K562 (cell line): ENCODE measurements at regions of chr22 and their contacts with region 1.

Region 1: DNA sequence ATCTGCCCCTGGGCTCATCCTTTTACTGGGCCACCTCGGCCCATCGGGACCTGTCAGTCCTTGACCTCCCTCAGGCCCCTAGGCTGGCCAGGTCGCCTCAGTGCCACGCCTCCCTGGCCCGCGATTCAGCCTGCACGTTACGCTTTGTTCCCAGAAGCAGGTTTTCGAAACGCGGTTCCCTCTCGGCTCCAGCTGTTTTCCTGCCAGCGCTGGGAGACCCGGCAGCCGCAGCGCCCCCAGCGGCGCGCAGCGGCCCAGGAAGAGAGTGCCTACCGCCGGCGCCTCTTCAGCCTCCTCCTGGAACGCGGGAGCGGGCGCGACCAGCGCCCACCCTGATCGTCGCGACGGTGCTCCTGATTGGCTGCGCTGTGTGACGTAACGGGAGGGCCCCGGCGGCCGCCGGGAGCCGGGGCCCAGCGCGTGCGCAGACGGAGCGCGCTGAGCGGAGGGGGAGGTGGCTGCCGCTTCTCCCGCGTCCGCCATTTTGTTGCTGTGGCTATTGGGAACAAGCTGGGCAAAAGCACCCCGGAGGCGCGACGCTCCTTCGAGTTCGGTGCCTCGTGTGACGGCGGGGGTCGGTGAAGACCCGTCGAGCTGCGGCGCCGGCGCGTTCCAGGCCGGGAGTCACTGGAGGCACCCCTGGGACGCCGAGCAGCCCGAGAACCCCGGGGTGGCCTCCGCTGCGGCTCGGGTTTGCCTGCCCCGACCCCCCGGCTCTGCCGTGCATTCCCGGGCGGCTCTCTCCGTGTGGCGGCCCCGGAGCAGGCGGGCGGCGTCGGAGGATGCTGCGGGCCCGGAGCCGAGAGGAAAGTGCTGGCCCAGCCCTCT is at the start of gene CRKL:
- DNase-seq: peak; percentile 100
- ATAC-seq: peak; percentile 93
- H3K4me3 ChIP-seq: peak within 1 kb of the TSS; percentile 67
- H3K27ac ChIP-seq: peak within 1 kb of the TSS; percentile 89
- H3K4me1 ChIP-seq: peaks cover 20 to 41% of the 10 kb centered on the region in 2 experiments
- H3K27me3 ChIP-seq: no peaks in the 10 kb centered on the region
- CTCF ChIP-seq: peak; percentile 99 to 100 (median 100)
- EP300 ChIP-seq: peak; percentile 88
- POLR2A ChIP-seq: no peak
- RAD21 ChIP-seq: no peak
- polyA plus RNA-seq, gene CRKL: 100 to 105 TPM

Region 2: GRCh38 chr22:20803696-20804324 is 113.4 kb before region 1 on chr22:
- CTCF ChIA-PET with region 1: interaction called, 3 read pairs
- POLR2A ChIA-PET with region 1: interaction called, 9 read pairs
- in situ Hi-C with region 1: no loop called
- intact Hi-C with region 1: loop called (anchors 2 kb)
- DNase-seq: peak; percentile 78 to 84 (median 84)
- ATAC-seq: peak; percentile 89
- H3K4me3 ChIP-seq: no peak overlapping the region
- H3K27ac ChIP-seq: no peak overlapping the region
- H3K4me1 ChIP-seq: peaks cover 3 to 13% of the 10 kb centered on the region in 2 experiments; a peak in 3 of 5 replicates
- H3K27me3 ChIP-seq: no peaks in the 10 kb centered on the region
- CTCF ChIP-seq: peak; percentile 94 to 100 (median 98)
- EP300 ChIP-seq: no peak
- POLR2A ChIP-seq: no peak
- RAD21 ChIP-seq: peak; percentile 95 to 99

Region 3: DNA sequence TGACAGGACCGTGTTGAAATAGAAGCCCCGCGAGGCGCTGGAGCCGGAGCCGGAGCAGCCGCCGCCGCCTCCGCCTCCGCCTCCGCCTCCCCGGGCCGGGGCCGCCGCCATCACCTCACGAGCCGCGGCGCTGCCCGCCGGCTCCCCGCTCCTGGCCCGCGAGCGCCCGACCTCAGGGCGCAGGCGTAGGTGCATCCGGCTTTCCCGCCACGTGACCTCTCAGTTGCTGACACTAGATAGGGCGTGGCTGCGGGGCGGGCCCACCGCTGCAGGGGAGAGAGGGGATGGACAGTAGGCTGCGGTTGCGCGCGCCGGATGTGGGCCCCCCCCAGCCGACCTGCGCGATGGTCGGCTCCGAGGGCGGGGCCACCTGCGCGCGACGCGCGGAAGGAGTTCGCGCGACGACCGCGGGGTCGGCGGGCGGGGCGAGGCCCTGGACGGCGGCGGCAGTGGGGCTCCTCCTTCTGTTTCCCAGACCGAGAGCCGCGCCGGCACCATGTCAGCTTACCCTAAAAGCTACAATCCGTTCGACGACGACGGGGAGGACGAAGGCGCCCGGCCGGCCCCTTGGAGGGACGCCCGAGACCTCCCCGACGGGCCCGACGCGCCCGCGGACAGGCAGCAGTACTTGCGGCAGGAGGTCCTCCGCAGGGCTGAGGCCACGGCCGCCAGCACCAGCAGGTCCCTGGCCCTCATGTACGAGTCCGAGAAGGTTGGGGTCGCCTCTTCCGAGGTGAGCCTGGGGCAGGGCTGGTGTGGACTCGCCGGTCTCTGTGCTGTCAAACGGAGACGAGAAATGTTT is 58.4 kb before region 1 on chr22 and contains the starts of genes PI4KA and SNAP29:
- CTCF ChIA-PET with region 1: no interaction called
- POLR2A ChIA-PET with region 1: interaction called, 8 read pairs
- in situ Hi-C with region 1: no loop called
- intact Hi-C with region 1: loop called (anchors 2 kb)
- DNase-seq: peak; percentile 100
- ATAC-seq: peak; percentile 92
- H3K4me3 ChIP-seq: peak within 1 kb of the TSS; percentile 57
- H3K27ac ChIP-seq: peak within 1 kb of the TSS; percentile 79
- H3K4me1 ChIP-seq: peaks cover 53 to 78% of the 10 kb centered on the region in 2 experiments
- H3K27me3 ChIP-seq: no peaks in the 10 kb centered on the region
- CTCF ChIP-seq: peak in 1 of 3 experiments; percentile 42; a peak in 2 of 6 replicates
- EP300 ChIP-seq: peak; percentile 84
- POLR2A ChIP-seq: no peak
- RAD21 ChIP-seq: no peak
- polyA plus RNA-seq, gene PI4KA: 7.3 to 11.1 TPM
- polyA plus RNA-seq, gene SNAP29: 19.5 to 22.8 TPM

Region 4: DNA sequence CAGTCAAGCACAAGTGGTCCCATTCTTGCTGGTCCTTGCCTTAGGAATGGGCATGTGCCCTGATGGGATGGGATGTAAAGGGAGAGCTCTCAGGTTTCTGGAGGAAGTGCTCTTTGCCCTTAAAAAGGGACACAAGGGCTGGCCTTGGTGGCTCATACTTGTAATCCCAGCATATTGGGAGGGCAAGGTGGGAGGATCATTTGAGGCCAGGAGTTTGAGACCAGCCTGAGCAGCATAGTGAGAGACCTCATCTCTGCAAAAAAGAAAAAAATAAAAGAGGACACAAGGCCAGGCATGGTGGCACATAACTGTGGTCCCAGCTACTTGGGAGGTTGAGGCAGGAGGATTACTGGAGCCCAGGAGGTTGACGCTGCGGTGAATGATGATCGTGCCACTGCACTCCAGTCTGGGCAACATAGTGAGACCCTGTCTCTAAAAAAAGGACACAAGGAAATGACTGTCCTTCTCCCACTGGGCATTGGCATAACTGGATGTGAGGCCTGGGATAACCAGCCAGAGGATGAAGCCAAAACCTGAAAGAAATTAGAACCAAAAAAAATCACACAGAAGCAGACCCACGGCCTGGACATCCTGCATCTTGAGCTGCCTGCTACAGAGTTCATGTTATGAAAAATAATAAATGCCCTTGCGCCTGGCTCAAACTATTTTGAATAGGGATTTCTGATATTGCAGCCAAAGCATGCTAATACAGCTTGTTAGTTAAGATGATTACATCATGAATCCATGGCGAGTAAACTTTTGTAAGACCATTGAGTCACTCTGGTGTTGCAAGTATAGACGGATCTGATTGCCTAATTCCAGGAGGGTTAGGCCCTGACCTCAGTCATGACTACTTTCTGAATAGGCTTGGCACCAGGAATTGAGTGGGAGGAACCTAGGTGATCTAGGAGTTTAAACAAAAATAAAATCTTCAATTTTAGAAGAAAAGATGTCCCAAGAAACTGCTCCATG is 12.9 kb before region 1 on chr22:
- CTCF ChIA-PET with region 1: no interaction called
- POLR2A ChIA-PET with region 1: interaction called, 1,556 read pairs
- in situ Hi-C with region 1: no loop called
- intact Hi-C with region 1: loop called (anchors 1 kb)
- DNase-seq: peak; percentile 48 to 63 (median 54)
- ATAC-seq: peak; percentile 9; the same call in 2 of the 3 replicates
- H3K4me3 ChIP-seq: no peak overlapping the region
- H3K27ac ChIP-seq: no peak overlapping the region
- H3K4me1 ChIP-seq: no peaks in the 10 kb centered on the region
- H3K27me3 ChIP-seq: peaks cover 15 to 27% of the 10 kb centered on the region in 2 experiments
- CTCF ChIP-seq: no peak
- EP300 ChIP-seq: peak; percentile 51; the same call in 1 of the 2 replicates
- POLR2A ChIP-seq: no peak
- RAD21 ChIP-seq: no peak

Region 5: GRCh38 chr22:20943104-20943933 is 26.1 kb after region 1 on chr22:
- CTCF ChIA-PET with region 1: no interaction called
- POLR2A ChIA-PET with region 1: interaction called, 1,556 read pairs
- in situ Hi-C with region 1: no loop called
- intact Hi-C with region 1: loop called (anchors 2 kb)
- DNase-seq: no peak
- ATAC-seq: no peak
- H3K4me3 ChIP-seq: no peak overlapping the region
- H3K27ac ChIP-seq: no peak overlapping the region
- H3K4me1 ChIP-seq: peaks cover 9 to 23% of the 10 kb centered on the region in 2 experiments; a peak in 3 of 5 replicates
- H3K27me3 ChIP-seq: no peaks in the 10 kb centered on the region
- CTCF ChIP-seq: no peak
- EP300 ChIP-seq: no peak
- POLR2A ChIP-seq: no peak
- RAD21 ChIP-seq: no peak

Region 6: DNA sequence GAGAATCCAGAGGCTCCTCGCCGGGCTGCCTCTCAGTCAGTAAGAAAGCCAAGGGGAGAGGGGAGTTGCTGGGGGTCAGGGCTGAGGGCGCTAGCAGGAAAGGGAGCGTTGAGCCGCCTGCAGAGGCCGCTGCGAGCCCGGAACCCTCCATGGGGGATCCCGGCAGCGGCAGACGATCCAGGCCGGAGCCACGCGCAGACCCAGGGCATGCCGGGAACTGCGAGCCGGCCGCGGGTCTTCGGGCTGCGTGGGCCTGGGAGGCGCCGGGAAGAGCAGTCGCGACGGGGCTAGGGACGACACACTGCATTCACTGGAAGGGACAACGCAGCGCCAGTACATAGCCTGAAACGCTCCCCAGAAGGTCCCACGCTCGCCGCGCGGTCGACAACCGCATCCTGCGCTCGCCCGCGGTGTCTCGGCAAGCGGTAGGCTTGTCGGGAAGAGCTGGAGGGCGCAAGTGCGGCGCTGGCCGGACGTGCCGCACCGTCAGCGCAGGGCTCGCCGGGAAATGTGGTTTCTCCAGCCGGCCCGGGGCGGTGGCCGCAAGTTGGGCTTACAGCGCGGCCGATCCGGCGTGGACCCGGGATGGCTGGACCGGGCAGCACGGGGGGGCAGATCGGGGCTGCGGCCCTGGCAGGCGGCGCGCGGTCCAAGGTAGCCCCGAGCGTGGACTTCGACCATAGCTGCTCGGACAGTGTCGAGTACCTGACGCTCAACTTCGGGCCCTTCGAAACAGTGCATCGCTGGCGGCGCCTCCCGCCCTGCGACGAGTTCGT is 64.8 kb after region 1 on chr22 and contains the start of gene LZTR1:
- CTCF ChIA-PET with region 1: no interaction called
- POLR2A ChIA-PET with region 1: interaction called, 1,556 read pairs
- in situ Hi-C with region 1: no loop called
- intact Hi-C with region 1: no loop called
- DNase-seq: peak; percentile 99 to 100 (median 100)
- ATAC-seq: peak; percentile 96
- H3K4me3 ChIP-seq: peak within 1 kb of the TSS; percentile 54
- H3K27ac ChIP-seq: peak within 1 kb of the TSS; percentile 86
- H3K4me1 ChIP-seq: peaks cover 19 to 48% of the 10 kb centered on the region in 2 experiments
- H3K27me3 ChIP-seq: peaks cover 3 to 9% of the 10 kb centered on the region in 2 experiments; a peak in 3 of 5 replicates
- CTCF ChIP-seq: peak; percentile 99 to 100 (median 99)
- EP300 ChIP-seq: no peak
- POLR2A ChIP-seq: no peak
- RAD21 ChIP-seq: peak; percentile 97
- polyA plus RNA-seq, gene LZTR1: 2.2 to 3.1 TPM